Ovary (tissue), 10 donors: ENCODE measurements at regions of chr2 and their contacts with region 1.

Region 1: GRCh38 chr2:176638167-176639015 is 369.1 kb downstream of the MTX2 start:
- DNase-seq: peak; percentile 73 to 88 (median 83)
- H3K4me3 ChIP-seq: peak overlapping the region; percentile 59
- H3K27ac ChIP-seq: peak overlapping the region; percentile 78 to 88
- H3K4me1 ChIP-seq: no peaks in the 10 kb centered on the region
- H3K27me3 ChIP-seq: no peaks in the 10 kb centered on the region
- CTCF ChIP-seq: peak; percentile 61 to 83 (median 63)
- EP300 ChIP-seq: no peak
- POLR2A ChIP-seq: no peak

Region 2: GRCh38 chr2:176126929-176127773 is 511.2 kb before region 1 on chr2:
- intact Hi-C with region 1: loop called (anchors 2 to 5 kb)
- DNase-seq: peak; percentile 67 to 87 (median 82)
- H3K4me3 ChIP-seq: peak overlapping the region; percentile 10
- H3K27ac ChIP-seq: no peak overlapping the region
- H3K4me1 ChIP-seq: peaks cover 2% of the 10 kb centered on the region
- H3K27me3 ChIP-seq: no peaks in the 10 kb centered on the region
- CTCF ChIP-seq: peak; percentile 88 to 95 (median 90)
- EP300 ChIP-seq: no peak
- POLR2A ChIP-seq: no peak

Region 3: DNA sequence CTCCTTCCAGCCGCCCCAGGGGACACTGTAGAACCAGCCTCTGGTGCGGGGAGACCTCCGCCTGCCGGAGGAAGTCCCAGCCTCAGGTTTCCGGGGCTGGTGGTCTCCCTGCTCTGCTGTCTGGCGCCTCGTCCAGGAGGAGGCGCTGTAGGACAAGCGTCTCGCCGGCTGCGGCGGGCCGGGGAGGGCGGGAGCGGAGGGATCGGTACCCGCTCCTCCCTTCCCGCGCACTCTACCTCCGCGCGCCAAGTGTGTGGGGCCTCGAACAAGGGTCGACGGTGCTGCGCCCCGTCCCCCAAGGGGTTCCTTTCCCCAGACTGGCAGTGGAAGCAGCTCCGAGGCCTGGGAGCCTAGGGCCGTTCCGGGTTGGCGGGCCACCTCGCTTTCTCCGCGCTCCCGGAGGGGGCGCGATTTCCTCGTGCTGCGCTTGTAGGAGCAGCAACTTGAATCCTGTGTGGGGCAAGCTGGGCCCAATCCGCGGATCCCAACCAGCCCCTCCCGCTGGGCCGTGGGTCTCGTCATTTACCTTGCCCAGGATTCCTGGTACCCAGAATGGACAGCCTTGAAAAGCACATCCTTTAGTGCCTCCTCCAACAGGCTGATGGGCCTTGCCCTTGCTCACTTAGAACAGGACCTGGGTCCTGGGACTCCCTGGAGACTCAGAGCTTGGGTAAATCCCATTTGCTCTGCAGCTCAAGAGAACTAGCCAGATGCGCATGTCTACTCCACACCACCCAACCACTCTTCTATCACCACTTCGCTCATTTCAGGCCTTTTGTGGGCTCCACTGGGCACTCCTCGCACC is 497.7 kb before region 1 on chr2:
- intact Hi-C with region 1: loop called in 1 of 4 experiments (anchors 5 kb)
- DNase-seq: peak; percentile 84 to 90 (median 90)
- H3K4me3 ChIP-seq: peak overlapping the region; percentile 53
- H3K27ac ChIP-seq: peak overlapping the region; percentile 80 to 99
- H3K4me1 ChIP-seq: peaks cover 9% of the 10 kb centered on the region
- H3K27me3 ChIP-seq: no peaks in the 10 kb centered on the region
- CTCF ChIP-seq: peak; percentile 98 to 99 (median 98)
- EP300 ChIP-seq: no peak
- POLR2A ChIP-seq: no peak

Region 4: GRCh38 chr2:176544991-176545956 is 93.1 kb before region 1 on chr2:
- intact Hi-C with region 1: no loop called
- DNase-seq: no peak
- H3K4me3 ChIP-seq: no peak overlapping the region
- H3K27ac ChIP-seq: no peak overlapping the region
- H3K4me1 ChIP-seq: no peaks in the 10 kb centered on the region
- H3K27me3 ChIP-seq: no peaks in the 10 kb centered on the region
- CTCF ChIP-seq: no peak
- EP300 ChIP-seq: no peak
- POLR2A ChIP-seq: no peak

Region 5: GRCh38 chr2:177155631-177156030 is 517.2 kb after region 1 on chr2:
- intact Hi-C with region 1: loop called in 1 of 4 experiments (anchors 10 kb)
- DNase-seq: no peak
- H3K4me3 ChIP-seq: no peak overlapping the region
- H3K27ac ChIP-seq: no peak overlapping the region
- H3K4me1 ChIP-seq: no peaks in the 10 kb centered on the region
- H3K27me3 ChIP-seq: no peaks in the 10 kb centered on the region
- CTCF ChIP-seq: no peak
- EP300 ChIP-seq: no peak
- POLR2A ChIP-seq: no peak